Naive thymus-derived CD4-positive, alpha-beta T cell (primary cell): ENCODE measurements at regions of chr2 and their contacts with region 1.

Region 1: DNA sequence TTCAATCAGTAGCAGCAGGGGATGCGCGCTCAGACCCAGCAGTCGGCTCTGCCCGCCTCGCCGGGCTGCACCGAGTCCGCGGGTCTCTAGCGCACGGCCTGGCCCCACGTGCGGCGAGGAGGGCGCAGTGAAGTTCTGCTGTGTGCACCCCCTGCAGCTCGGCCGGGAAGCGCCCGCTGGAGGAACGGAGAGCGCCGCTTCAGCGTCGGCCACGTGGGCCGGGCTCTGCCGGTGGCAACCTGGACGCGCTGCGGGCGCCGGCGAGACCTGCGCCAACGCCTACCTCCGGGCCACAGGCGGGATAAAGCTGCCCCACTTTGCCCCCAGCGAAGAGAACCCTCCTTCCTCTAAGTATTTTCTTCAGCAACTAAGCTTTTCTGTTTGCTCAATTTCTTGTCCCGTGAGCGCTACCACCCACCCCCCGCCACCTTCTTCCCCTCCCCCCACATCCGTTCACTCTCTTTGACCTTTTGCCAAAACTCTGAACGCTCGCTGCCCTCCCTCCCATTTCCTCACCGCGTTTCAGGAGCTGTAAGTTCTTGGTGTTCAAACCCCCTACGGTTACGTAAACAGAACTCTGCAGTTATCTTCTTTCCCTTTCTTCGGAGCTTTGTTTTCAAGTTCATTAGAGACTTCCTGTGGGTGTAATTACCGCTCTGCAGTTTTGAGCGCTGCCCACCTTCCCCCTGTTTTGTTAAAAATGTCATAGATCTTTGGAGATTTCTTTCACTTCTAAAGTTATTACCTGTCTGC is 42.6 kb upstream of the EDAR start:
- DNase-seq: peak; percentile 45 to 98 (median 93)
- ATAC-seq: peak; percentile 83
- H3K4me3 ChIP-seq: peak overlapping the region; percentile 58
- H3K4me3 Mint-ChIP-seq: peak overlapping the region; percentile 45 to 91 (median 77)
- H3K27ac ChIP-seq: peak overlapping the region; percentile 83
- H3K27ac Mint-ChIP-seq: peak overlapping the region; percentile 84 to 99 (median 98)
- H3K4me1 ChIP-seq: peaks cover 44 to 72% of the 10 kb centered on the region in 2 donors
- H3K4me1 Mint-ChIP-seq: peaks cover 33 to 84% (median 68%) of the 10 kb centered on the region in 7 donors
- H3K27me3 ChIP-seq: no peaks in the 10 kb centered on the region
- H3K27me3 Mint-ChIP-seq: no peaks in the 10 kb centered on the region

Region 2: DNA sequence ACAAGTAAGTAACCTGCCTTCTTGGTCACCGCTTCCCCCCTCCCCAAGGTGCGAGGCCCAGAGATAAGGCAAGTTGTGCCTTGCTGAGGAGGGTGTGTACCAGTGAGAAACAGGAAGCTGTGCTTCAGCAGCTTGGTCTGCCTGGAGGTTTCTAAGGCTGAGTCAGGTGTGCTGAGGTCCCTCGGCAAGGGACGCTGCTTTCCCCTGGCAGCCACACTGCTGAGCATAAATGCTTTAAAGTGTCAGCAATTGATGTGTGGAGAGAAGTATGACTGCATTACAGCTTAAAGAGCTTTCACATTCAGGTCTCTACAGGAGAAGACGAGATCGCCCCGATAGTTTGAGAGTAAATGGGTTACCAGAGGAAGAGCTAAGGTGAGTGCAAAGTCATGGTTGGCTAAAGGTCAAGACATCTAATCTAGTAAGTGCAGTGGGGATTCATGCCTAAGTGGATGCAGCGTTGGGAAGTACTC is 410.5 kb before region 1 on chr2:
- CTCF ChIA-PET with region 1: no interaction called
- POLR2A ChIA-PET with region 1: interaction called, 3 read pairs
- intact Hi-C with region 1: loop called in 1 of 2 experiments (anchors 5 kb)
- DNase-seq: peak; percentile 32 to 80 (median 75)
- ATAC-seq: peak; percentile 97
- H3K4me3 ChIP-seq: peak overlapping the region; percentile 59
- H3K4me3 Mint-ChIP-seq: peak overlapping the region; percentile 87 to 96 (median 91)
- H3K27ac ChIP-seq: peak overlapping the region; percentile 74
- H3K27ac Mint-ChIP-seq: peak overlapping the region; percentile 91 to 97 (median 94)
- H3K4me1 ChIP-seq: peaks cover 36 to 64% of the 10 kb centered on the region in 2 donors
- H3K4me1 Mint-ChIP-seq: peaks cover 44 to 93% (median 84%) of the 10 kb centered on the region in 7 donors
- H3K27me3 ChIP-seq: no peaks in the 10 kb centered on the region
- H3K27me3 Mint-ChIP-seq: no peaks in the 10 kb centered on the region

Region 3: DNA sequence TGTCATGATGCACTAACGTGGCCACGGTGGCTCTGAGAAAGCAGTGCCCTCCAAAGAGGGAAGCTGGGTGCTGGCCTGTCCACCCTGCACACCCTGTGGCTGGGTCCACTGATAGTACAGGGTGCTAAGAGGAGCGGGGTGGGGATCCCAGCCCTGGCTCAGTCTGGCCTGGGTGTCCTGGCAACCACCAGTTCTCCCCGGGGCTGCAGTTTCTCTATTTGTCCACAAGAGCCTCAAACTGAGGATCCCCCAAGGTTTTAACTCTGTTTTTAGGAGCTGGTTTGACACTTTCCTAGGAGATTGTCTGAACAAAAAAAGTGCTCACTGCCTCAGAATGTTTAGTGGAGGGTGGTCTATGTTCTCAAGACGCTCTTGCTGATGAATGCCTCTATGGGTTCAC is 71.6 kb before region 1 on chr2:
- CTCF ChIA-PET with region 1: interaction called, 4 read pairs
- POLR2A ChIA-PET with region 1: interaction called, 10 read pairs
- intact Hi-C with region 1: loop called in 1 of 2 experiments (anchors 1 kb)
- DNase-seq: no peak
- ATAC-seq: no peak
- H3K4me3 ChIP-seq: no peak overlapping the region
- H3K4me3 Mint-ChIP-seq: peak overlapping the region in 8 of 10 donors; percentile 13 to 89 (median 59)
- H3K27ac ChIP-seq: no peak overlapping the region
- H3K27ac Mint-ChIP-seq: peak overlapping the region in 8 of 9 donors; percentile 78 to 98 (median 94)
- H3K4me1 ChIP-seq: peaks cover 10 to 76% of the 10 kb centered on the region in 2 donors
- H3K4me1 Mint-ChIP-seq: peaks cover 10 to 90% (median 85%) of the 10 kb centered on the region in 7 donors
- H3K27me3 ChIP-seq: no peaks in the 10 kb centered on the region
- H3K27me3 Mint-ChIP-seq: no peaks in the 10 kb centered on the region

Region 4: GRCh38 chr2:109006971-109007370 is 24.7 kb before region 1 on chr2:
- CTCF ChIA-PET with region 1: no interaction called
- POLR2A ChIA-PET with region 1: interaction called, 11 read pairs
- intact Hi-C with region 1: no loop called
- DNase-seq: no peak
- ATAC-seq: no peak
- H3K4me3 ChIP-seq: no peak overlapping the region
- H3K4me3 Mint-ChIP-seq: no peak overlapping the region
- H3K27ac ChIP-seq: no peak overlapping the region
- H3K27ac Mint-ChIP-seq: peak overlapping the region in 1 of 9 donors; percentile 57
- H3K4me1 ChIP-seq: no peaks in the 10 kb centered on the region
- H3K4me1 Mint-ChIP-seq: peaks cover 8 to 56% (median 35%) of the 10 kb centered on the region in 7 donors
- H3K27me3 ChIP-seq: no peaks in the 10 kb centered on the region
- H3K27me3 Mint-ChIP-seq: peaks cover 0 to 8% (median 0%) of the 10 kb centered on the region in 5 donors

Region 5: DNA sequence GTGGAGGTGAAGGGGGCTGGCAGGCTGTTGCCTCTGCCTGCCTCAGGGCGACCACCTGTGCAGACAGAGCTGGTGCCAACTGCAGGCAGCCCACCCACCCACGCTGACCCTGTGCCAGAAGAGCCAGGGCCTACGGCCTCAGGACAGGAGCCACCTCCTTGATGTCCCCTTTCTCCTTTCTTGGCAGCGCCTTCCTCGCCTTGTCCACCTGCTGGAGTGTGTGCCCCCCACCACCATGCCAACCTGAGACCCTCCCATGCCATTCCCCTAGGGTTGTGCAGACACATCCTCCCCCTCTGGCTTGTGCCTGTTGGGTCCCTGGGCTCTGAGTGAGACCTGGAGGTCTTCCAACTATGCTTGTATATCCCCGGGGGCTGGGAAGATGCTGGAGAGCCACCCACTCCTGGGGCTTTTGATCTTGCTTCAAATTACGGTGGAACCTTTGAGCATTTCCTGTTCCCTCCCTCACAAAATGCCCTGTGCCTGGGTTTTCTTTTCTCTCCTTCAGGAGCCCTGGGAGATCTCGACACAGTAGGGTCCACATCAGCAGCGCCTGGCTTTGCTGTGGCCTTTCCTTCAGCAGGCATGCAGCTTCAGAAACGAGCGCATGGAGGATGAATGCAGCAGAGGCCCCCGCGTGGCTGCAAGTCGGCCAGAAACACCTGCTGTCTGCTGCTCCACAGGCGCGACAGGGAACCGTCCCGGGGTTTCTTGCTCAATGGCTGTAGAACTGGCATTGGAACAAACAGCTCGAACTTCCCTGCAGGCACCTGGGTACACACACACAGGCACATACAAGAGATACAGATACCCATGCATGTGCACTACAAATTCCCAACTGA is 31.4 kb after region 1 on chr2:
- CTCF ChIA-PET with region 1: interaction called, 4 read pairs
- POLR2A ChIA-PET with region 1: interaction called, 13 read pairs
- intact Hi-C with region 1: loop called in 1 of 2 experiments (anchors 1 kb)
- DNase-seq: peak in 5 of 9 donors; percentile 17 to 37 (median 22)
- ATAC-seq: no peak
- H3K4me3 ChIP-seq: no peak overlapping the region
- H3K4me3 Mint-ChIP-seq: peak overlapping the region in 9 of 10 donors; percentile 5 to 62 (median 56)
- H3K27ac ChIP-seq: no peak overlapping the region
- H3K27ac Mint-ChIP-seq: peak overlapping the region in 7 of 9 donors; percentile 30 to 74 (median 62)
- H3K4me1 ChIP-seq: peaks cover 0 to 13% of the 10 kb centered on the region in 2 donors
- H3K4me1 Mint-ChIP-seq: peaks cover 11 to 61% (median 46%) of the 10 kb centered on the region in 7 donors
- H3K27me3 ChIP-seq: no peaks in the 10 kb centered on the region
- H3K27me3 Mint-ChIP-seq: peaks cover 0 to 4% (median 0%) of the 10 kb centered on the region in 5 donors

Region 6: GRCh38 chr2:109213646-109214417 is 182.2 kb after region 1 on chr2:
- CTCF ChIA-PET with region 1: no interaction called
- POLR2A ChIA-PET with region 1: interaction called, 3 read pairs
- intact Hi-C with region 1: loop called (anchors 1 to 2 kb)
- DNase-seq: peak; percentile 39 to 87 (median 81)
- ATAC-seq: peak; percentile 82
- H3K4me3 ChIP-seq: no peak overlapping the region
- H3K4me3 Mint-ChIP-seq: peak overlapping the region; percentile 56 to 83 (median 78)
- H3K27ac ChIP-seq: no peak overlapping the region
- H3K27ac Mint-ChIP-seq: peak overlapping the region; percentile 54 to 95 (median 77)
- H3K4me1 ChIP-seq: peaks cover 44 to 56% of the 10 kb centered on the region in 2 donors
- H3K4me1 Mint-ChIP-seq: peaks cover 60 to 79% (median 72%) of the 10 kb centered on the region in 7 donors
- H3K27me3 ChIP-seq: peaks cover 16 to 23% of the 10 kb centered on the region in 2 donors
- H3K27me3 Mint-ChIP-seq: peaks cover 58 to 74% (median 61%) of the 10 kb centered on the region in 5 donors